Activated T-helper 2 cell treated with anti-CD3 and anti-CD28 coated beads, Interferon-gamma antibody, Interleukin-2, Interleukin-4, amounts not matched to agents 10 μg/mL and 5 μg/mL and 100 μg/mL, durations not matched to agents 14 hours and 24 hours and 36 hours (primary cell): ENCODE measurements at regions of chr9 and their contacts with region 1.

Region 1: DNA sequence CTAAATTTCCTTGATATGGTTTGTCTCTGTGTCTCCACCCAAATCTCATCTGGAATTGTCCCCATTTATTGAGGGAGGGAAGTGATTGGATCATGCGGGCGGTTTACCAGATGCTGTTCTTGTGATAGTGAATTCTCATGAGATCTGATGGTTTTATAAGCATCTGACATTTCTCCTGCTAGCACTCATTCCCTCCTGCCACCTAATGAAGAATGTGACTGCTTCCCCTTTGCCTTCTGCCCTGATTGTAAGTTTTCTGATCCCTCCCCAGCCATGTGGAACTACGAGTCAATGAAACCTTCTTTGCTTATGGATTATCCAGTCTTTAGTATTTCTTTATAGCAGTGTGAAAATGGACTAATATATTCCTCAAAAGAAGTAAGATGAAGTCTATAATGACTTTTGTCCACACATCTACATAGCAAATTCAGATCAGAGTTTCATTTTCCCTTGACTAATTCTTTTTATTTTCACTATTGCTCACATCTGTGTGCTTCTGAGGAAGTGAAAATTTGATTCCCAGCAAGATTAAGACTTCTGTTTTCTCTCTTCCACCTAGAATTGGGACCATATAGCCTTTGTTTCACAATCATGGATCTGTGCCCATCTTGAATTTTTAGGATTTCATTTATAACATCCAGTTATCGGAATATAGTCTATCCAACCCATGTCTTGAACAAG is 393.5 kb downstream of the DMAC1 start:
- DNase-seq: no peak
- H3K4me3 Mint-ChIP-seq: no peak overlapping the region
- H3K27ac Mint-ChIP-seq: peak overlapping the region; percentile 40
- H3K4me1 Mint-ChIP-seq: peaks cover 42% of the 10 kb centered on the region
- H3K27me3 Mint-ChIP-seq: peaks cover 19% of the 10 kb centered on the region

Region 2: DNA sequence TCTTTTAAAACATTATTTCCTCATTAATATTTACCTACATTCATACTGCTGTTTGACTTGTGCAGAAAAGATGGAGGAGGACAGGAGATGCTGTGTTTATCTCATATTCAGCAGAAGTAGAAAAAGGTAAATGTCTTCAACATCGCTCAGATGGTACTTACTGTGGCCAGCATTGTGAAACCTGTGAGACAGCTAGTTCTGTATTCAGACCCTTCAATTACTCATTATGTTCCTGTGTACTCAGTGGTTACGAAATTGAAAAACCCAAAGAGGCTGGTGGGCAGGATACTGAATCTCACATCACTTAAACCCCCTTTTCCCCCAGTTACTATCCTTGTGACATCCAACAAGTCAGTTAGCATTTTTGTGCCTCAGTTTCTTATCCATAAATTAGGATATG is 432.3 kb before region 1 on chr9:
- intact Hi-C with region 1: loop called (anchors 1 kb)
- DNase-seq: no peak
- H3K4me3 Mint-ChIP-seq: no peak overlapping the region
- H3K27ac Mint-ChIP-seq: no peak overlapping the region
- H3K4me1 Mint-ChIP-seq: peaks cover 21% of the 10 kb centered on the region
- H3K27me3 Mint-ChIP-seq: no peaks in the 10 kb centered on the region

Region 3: DNA sequence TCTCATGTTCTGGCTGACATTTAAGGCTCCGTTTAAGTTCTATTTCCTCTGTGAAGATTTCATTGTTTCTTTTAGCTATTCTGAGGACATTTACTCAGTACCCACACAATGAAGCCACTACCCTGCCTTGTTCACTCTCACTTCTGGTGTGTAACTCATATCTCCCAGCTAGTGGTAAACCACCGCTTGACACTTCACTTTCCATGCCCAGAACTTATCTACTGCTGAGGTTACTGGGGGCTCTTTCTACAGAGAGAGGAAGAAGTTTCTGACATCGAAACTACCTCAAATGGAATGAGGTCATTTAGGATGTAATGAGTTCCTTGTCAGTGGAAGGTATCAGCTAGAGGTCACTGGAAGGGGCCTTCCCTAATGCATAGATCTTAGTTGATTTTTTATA is 107.9 kb before region 1 on chr9:
- intact Hi-C with region 1: loop called (anchors 1 kb)
- DNase-seq: peak; percentile 27
- H3K4me3 Mint-ChIP-seq: no peak overlapping the region
- H3K27ac Mint-ChIP-seq: peak overlapping the region; percentile 44
- H3K4me1 Mint-ChIP-seq: peaks cover 21% of the 10 kb centered on the region
- H3K27me3 Mint-ChIP-seq: peaks cover 28% of the 10 kb centered on the region

Region 4: GRCh38 chr9:7799234-7799943 is 393.3 kb after region 1 on chr9 and contains the start of gene DMAC1:
- intact Hi-C with region 1: loop called (anchors 5 kb)
- DNase-seq: peak; percentile 70
- H3K4me3 Mint-ChIP-seq: peak within 1 kb of the TSS; percentile 90
- H3K27ac Mint-ChIP-seq: peak within 1 kb of the TSS; percentile 89
- H3K4me1 Mint-ChIP-seq: peaks cover 23% of the 10 kb centered on the region
- H3K27me3 Mint-ChIP-seq: no peaks in the 10 kb centered on the region
- total RNA-seq, gene DMAC1: 50.5 and 51.0 TPM in 2 replicates

Region 5: GRCh38 chr9:8188720-8189407 is 782.8 kb after region 1 on chr9:
- intact Hi-C with region 1: loop called (anchors 5 kb)
- DNase-seq: no peak
- H3K4me3 Mint-ChIP-seq: no peak overlapping the region
- H3K27ac Mint-ChIP-seq: peak overlapping the region; percentile 46
- H3K4me1 Mint-ChIP-seq: peaks cover 18% of the 10 kb centered on the region
- H3K27me3 Mint-ChIP-seq: no peaks in the 10 kb centered on the region

Region 6: GRCh38 chr9:8429768-8430167 is 1023.7 kb after region 1 on chr9:
- intact Hi-C with region 1: loop called (anchors 5 kb)
- DNase-seq: no peak
- H3K4me3 Mint-ChIP-seq: no peak overlapping the region
- H3K27ac Mint-ChIP-seq: peak overlapping the region; percentile 78
- H3K4me1 Mint-ChIP-seq: peaks cover 40% of the 10 kb centered on the region
- H3K27me3 Mint-ChIP-seq: no peaks in the 10 kb centered on the region